Esophagus muscularis mucosa (tissue), 4 donors: ENCODE measurements at regions of chr1 and their contacts with region 1.

Region 1: GRCh38 chr1:201481761-201482493 is 12.9 kb upstream of the PHLDA3 start:
- DNase-seq: peak; percentile 97
- H3K4me3 ChIP-seq: peak overlapping the region; percentile 36 to 55 (median 44)
- H3K27ac ChIP-seq: peak overlapping the region; percentile 93 to 99 (median 97)
- H3K4me1 ChIP-seq: peaks cover 36 to 69% (median 62%) of the 10 kb centered on the region in 4 donors
- H3K27me3 ChIP-seq: no peaks in the 10 kb centered on the region
- CTCF ChIP-seq: peak; percentile 89 to 92 (median 89)
- EP300 ChIP-seq: no peak
- POLR2A ChIP-seq: no peak

Region 2: DNA sequence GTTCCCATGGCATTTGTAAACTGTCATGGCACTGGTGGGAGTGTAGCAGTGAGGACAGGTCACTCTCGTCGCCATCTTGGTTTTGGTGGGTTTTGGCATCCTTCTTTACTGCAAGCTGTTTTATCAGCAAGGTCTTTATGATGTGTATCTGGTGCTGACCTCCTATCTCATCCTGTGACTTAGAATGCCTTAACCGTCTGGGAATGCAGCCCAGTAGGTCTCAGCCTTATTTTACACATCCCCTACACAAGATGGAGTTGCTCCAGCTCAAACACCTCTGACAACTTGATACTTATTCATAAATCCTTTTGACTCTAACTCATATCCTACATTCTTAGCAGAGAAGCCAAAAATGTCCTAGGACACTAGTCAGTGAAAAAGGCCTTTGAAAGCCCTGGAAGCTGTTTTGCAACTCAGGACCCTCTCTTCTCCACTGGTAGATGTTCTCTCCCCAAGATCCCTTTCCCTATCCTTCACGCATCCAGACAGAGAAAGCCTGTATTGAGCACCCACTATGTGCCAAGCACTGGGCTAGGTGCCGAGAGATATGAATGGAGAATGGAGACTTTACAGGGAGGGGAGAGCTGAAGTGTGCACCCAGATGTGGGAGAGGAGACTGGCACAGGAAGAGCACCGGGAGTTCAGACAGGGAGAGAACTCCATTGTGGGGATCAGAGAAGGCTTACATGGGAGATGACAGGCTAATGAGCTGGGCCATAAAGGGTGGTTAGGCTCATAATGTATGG is 31.7 kb after region 1 on chr1:
- intact Hi-C with region 1: loop called (anchors 1 kb)
- DNase-seq: no peak
- H3K4me3 ChIP-seq: no peak overlapping the region
- H3K27ac ChIP-seq: peak overlapping the region; percentile 54 to 99 (median 96)
- H3K4me1 ChIP-seq: peaks cover 24 to 42% (median 34%) of the 10 kb centered on the region in 4 donors
- H3K27me3 ChIP-seq: no peaks in the 10 kb centered on the region
- CTCF ChIP-seq: no peak
- EP300 ChIP-seq: no peak
- POLR2A ChIP-seq: no peak

Region 3: DNA sequence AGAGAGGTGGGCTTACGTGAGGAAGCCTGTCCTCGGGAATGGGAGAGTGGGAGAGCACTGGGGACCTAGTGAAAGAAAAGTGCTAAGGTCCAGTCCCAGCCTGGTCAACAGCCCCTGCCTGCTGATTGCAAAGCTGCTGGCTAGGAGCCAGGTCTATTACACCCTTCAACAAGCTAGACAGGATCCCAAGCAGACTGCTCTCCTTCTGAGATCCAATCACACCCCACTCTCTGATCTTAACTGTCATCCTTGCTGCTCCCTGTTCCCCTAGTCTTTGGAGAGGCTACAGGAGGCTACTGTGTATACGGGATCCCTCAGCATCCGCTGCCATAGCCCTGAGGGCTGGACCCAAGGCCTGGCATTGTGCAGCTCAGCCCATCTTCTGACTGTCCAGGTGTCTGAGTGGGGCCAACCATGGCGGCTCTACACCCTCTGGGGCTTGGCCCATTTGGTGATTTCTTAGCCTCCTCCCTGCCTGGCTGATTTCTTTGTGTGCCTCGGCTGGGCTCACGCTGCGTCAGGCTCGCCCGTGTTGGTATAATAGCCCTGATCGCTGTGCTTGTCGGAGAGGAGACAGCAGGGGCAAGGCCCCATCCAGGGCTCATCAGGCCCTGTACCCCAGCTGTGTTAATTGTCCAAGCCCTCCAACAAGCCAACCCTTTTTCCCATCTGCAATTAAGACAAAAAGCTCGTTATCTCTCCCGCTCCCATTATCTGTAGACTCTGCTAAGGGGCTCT is 100.9 kb after region 1 on chr1:
- intact Hi-C with region 1: no loop called
- DNase-seq: no peak
- H3K4me3 ChIP-seq: no peak overlapping the region
- H3K27ac ChIP-seq: peak overlapping the region in 1 of 4 donors; percentile 4
- H3K4me1 ChIP-seq: peaks cover 22 to 36% (median 30%) of the 10 kb centered on the region in 4 donors
- H3K27me3 ChIP-seq: no peaks in the 10 kb centered on the region
- CTCF ChIP-seq: no peak
- EP300 ChIP-seq: no peak
- POLR2A ChIP-seq: no peak